Posterior cingulate gyrus (tissue), 11 donors: ENCODE measurements at regions of chr7 and their contacts with region 1.

Region 1: GRCh38 chr7:55415173-55415778 is 50.1 kb downstream of the LANCL2 start:
- DNase-seq: peak; percentile 59 to 97 (median 87)

Region 2: DNA sequence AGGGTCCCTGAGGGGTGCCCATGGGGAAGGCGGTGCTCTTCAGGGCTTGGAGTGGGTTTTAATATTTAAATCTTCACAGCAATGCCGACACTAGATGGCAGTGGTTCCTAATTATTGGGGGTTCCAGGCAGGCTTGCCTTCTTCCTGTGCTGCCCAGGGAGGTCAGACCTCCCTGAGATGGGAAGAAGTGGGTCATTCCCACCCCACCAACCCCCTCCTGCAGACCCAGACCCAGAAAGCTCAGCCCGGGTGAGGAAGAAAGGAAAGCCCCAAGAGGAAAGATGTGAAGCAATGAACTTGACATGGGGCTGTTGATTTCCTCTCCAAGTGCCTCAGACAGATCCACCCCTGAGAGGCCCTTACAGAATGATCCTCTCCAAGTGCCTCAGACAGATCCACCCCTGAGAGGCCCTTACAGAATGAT is 135.2 kb before region 1 on chr7:
- intact Hi-C with region 1: loop called (anchors 1 kb)
- DNase-seq: peak in 6 of 10 donors; percentile 51 to 89 (median 62)

Region 3: DNA sequence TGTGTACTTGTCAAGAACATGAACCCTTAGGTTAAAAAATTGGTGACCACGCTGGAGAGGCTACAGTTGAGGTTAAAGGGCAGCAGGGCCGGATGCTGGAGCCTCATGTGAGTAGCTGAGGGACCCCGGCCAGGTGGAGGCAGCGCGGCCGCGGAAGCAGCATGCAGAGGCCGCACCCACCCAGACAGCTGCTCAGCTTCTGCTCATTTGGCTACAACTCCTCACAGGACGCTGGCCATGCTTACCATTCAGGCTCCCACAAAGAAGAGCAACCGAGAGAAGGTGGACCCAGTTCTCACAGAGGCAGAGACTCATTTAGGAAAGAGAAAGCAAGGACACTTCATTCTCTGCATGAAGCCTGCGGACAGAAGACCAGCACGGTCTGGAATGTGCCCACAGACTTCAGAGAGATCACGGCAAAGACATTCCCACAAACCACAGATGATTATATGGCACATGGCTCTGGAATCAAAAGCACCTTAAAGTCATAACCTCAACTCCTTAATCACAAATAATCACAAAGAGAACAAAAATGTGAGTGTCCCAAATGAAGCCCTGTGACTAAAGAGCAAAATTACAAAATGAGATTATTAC is 62.6 kb after region 1 on chr7:
- intact Hi-C with region 1: no loop called
- DNase-seq: peak in 1 of 10 donors; percentile 65

Region 4: GRCh38 chr7:55488216-55488615 is 72.9 kb after region 1 on chr7:
- intact Hi-C with region 1: no loop called
- DNase-seq: peak in 2 of 10 donors; percentile 24 to 49